Activated CD4-positive, alpha-beta memory T cell treated with anti-CD3 and anti-CD28 coated beads for 36 hours (primary cell): ENCODE measurements at regions of chr17 and their contacts with region 1.

Region 1: GRCh38 chr17:76397687-76398487 is 13.5 kb downstream of the SPHK1 start:
- DNase-seq: peak; percentile 90
- H3K4me3 Mint-ChIP-seq: no peak overlapping the region
- H3K27ac Mint-ChIP-seq: no peak overlapping the region
- H3K4me1 Mint-ChIP-seq: no peaks in the 10 kb centered on the region
- H3K27me3 Mint-ChIP-seq: no peaks in the 10 kb centered on the region

Region 2: DNA sequence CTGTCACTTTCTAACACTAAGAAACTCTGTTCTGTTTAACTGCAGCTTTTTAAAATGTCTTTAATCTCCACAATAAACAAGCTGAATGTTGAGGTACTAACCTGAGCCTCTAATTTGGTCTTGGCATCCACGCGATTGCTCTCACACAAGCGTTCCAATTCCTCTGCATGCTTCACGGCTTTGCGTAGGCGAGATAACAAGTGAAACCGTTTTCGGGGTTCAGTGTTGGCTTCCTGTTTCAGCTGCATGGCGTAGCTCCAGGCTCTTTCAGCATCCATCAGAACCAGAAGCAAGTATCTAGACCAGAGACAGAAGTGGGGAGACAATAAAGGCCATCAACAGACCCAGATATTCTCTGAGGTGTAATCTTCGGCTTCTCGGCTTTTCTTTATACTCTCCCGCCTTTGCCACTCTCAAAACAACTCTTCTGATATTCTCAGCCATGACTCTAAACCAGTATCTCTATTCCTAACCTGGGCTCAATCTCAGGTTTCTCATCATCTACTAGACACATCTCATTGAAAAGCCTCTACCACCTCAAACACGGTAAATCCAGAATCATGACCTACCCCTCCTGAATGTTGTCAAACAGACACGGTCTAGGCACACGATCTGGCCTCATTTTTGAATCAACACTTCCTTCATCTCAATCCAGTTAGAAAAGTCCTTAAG is 333.9 kb before region 1 on chr17:
- CTCF ChIA-PET with region 1: no interaction called
- POLR2A ChIA-PET with region 1: no interaction called
- intact Hi-C with region 1: no loop called
- DNase-seq: peak; percentile 80
- H3K4me3 Mint-ChIP-seq: peak overlapping the region; percentile 25
- H3K27ac Mint-ChIP-seq: peak overlapping the region; percentile 84
- H3K4me1 Mint-ChIP-seq: peaks cover 31% of the 10 kb centered on the region
- H3K27me3 Mint-ChIP-seq: no peaks in the 10 kb centered on the region

Region 3: DNA sequence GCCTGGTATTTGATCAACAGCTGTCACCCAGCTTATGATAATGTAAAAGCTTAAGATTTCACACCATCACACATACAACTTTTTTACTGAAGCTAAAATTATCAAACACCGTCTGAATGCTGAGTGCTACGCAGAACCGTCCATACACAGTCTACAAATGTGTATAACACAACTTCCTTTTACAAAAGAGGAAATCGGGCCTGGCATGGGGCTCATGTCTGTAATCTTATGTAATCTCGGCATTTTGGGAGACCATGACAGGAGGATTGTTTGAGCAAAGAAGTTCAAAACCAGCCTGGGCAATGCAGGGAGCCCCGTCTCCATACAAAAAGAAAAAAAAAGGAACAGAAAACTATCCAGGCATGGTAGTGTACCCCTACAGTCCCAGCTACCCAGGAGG is 70.2 kb before region 1 on chr17:
- CTCF ChIA-PET with region 1: interaction called, 10 read pairs
- POLR2A ChIA-PET with region 1: no interaction called
- intact Hi-C with region 1: no loop called
- DNase-seq: no peak
- H3K4me3 Mint-ChIP-seq: no peak overlapping the region
- H3K27ac Mint-ChIP-seq: no peak overlapping the region
- H3K4me1 Mint-ChIP-seq: no peaks in the 10 kb centered on the region
- H3K27me3 Mint-ChIP-seq: no peaks in the 10 kb centered on the region

Region 4: GRCh38 chr17:76353599-76354316 is 44.1 kb before region 1 on chr17 and contains the start of gene PRPSAP1:
- CTCF ChIA-PET with region 1: interaction called, 33 read pairs
- POLR2A ChIA-PET with region 1: interaction called, 3 read pairs
- intact Hi-C with region 1: no loop called
- DNase-seq: peak; percentile 88
- H3K4me3 Mint-ChIP-seq: peak within 1 kb of the TSS; percentile 96
- H3K27ac Mint-ChIP-seq: peak within 1 kb of the TSS; percentile 99
- H3K4me1 Mint-ChIP-seq: peaks cover 18% of the 10 kb centered on the region
- H3K27me3 Mint-ChIP-seq: no peaks in the 10 kb centered on the region
- total RNA-seq, gene PRPSAP1: 40.1 to 42.1 TPM

Region 5: DNA sequence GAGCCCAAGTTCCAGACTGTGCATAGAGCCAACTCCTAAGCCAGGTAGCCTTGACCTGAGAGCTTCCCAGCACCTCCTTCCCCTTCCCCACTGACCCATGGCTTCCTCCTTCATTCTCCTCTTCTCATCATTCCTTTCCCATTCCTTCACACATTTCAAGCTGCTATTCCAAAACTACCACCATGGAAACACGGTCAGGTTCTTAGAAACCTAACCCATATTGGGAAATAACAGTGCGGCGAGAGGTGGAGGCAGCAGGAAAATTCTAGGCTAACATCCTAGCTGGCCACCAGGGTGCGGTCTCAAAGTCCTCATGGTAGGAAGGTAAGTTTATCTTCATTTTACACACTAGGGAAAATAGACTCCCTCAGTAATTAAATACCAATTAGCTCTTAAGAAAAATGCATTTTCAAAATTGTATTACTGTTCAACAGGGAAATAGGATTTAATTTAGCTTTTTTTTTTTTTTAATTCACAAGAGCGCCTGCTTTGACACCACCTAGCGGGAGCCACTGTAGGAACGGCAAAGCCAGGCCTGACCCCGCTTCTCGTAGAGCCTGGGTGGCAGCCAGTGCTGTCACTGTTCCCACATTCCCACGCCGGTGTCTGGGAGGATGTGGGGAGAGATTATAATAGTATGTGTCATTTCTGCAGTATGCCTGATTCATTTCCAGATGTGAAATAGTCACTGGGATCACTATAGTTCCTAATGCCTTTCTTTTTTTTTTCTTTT is 27.5 kb before region 1 on chr17:
- CTCF ChIA-PET with region 1: interaction called, 36 read pairs
- POLR2A ChIA-PET with region 1: no interaction called
- intact Hi-C with region 1: no loop called
- DNase-seq: peak; percentile 27
- H3K4me3 Mint-ChIP-seq: no peak overlapping the region
- H3K27ac Mint-ChIP-seq: no peak overlapping the region
- H3K4me1 Mint-ChIP-seq: peaks cover 5% of the 10 kb centered on the region
- H3K27me3 Mint-ChIP-seq: no peaks in the 10 kb centered on the region

Region 6: GRCh38 chr17:76408052-76408849 is 10.4 kb after region 1 on chr17:
- CTCF ChIA-PET with region 1: interaction called, 43 read pairs
- POLR2A ChIA-PET with region 1: no interaction called
- intact Hi-C with region 1: no loop called
- DNase-seq: peak; percentile 82
- H3K4me3 Mint-ChIP-seq: no peak overlapping the region
- H3K27ac Mint-ChIP-seq: no peak overlapping the region
- H3K4me1 Mint-ChIP-seq: peaks cover 8% of the 10 kb centered on the region
- H3K27me3 Mint-ChIP-seq: no peaks in the 10 kb centered on the region

Region 7: DNA sequence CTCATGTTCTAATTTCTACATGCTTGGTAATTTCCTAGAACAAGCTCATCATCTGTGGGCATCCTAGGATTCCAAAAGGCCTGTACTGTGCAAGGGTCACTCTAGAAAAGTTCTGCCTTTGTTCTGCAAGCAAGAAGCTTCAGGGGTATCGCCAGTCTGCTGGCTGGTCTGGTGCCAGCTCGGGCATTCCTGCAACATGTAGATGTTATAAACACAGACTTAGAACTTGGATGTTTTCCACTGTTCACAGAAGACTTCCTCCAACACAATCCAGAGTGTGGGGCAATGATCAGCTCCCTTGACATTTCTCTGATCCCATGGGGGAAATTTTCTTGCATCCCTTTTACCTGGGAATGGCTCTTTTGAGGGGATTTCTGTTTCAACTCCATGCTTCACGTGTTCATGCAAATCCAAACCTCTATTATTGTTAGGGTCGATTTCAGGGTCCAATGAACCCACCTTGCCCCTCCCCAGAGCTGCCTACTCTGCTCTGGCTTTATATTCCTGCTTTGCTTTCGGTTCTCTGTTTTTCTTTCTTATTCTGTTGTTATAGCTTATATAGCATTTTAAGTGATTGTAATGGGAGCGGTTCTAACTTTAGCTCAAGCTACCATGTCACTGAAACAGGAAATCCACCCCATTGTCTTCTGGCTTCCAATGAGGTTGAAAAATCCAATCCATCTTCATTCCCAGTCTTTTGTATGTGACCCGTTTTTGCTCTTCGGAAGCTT is 29.8 kb after region 1 on chr17:
- CTCF ChIA-PET with region 1: interaction called, 10 read pairs
- POLR2A ChIA-PET with region 1: no interaction called
- intact Hi-C with region 1: no loop called
- DNase-seq: no peak
- H3K4me3 Mint-ChIP-seq: no peak overlapping the region
- H3K27ac Mint-ChIP-seq: no peak overlapping the region
- H3K4me1 Mint-ChIP-seq: peaks cover 5% of the 10 kb centered on the region
- H3K27me3 Mint-ChIP-seq: no peaks in the 10 kb centered on the region

Region 8: GRCh38 chr17:76467366-76467765 is 69.5 kb after region 1 on chr17 and contains the start of gene AANAT:
- CTCF ChIA-PET with region 1: no interaction called
- POLR2A ChIA-PET with region 1: no interaction called
- intact Hi-C with region 1: no loop called
- DNase-seq: no peak
- H3K4me3 Mint-ChIP-seq: no peak within 1 kb of the TSS
- H3K27ac Mint-ChIP-seq: no peak within 1 kb of the TSS
- H3K4me1 Mint-ChIP-seq: peaks cover 4% of the 10 kb centered on the region
- H3K27me3 Mint-ChIP-seq: no peaks in the 10 kb centered on the region
- total RNA-seq, gene AANAT: not detected

Region 9: GRCh38 chr17:76506408-76507349 is 108.8 kb after region 1 on chr17:
- CTCF ChIA-PET with region 1: interaction called, 24 read pairs
- POLR2A ChIA-PET with region 1: no interaction called
- intact Hi-C with region 1: no loop called
- DNase-seq: peak; percentile 93
- H3K4me3 Mint-ChIP-seq: no peak overlapping the region
- H3K27ac Mint-ChIP-seq: no peak overlapping the region
- H3K4me1 Mint-ChIP-seq: peaks cover 12% of the 10 kb centered on the region
- H3K27me3 Mint-ChIP-seq: no peaks in the 10 kb centered on the region

Region 10: DNA sequence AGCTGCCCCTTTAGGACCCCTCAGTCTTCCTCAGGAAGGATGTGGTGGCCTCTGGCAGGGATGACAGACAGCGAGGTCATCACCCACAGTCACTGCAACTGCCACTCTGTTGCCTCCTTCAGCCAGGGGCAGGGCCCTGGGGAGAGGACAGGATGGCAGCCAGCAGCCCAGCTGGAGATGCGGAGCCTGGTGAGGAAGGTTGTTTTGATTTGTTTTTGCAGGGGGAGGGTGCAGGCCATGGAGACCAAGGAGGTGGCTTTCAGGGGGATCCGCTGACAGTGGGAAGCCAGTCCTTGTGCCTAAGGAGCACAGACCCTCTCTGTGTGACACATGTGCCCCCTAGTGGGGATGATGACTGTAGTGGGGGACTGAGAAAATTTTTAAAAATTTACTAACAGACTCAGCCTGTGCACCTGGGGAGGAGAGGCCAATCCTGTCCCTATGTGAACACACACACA is 149.3 kb after region 1 on chr17:
- CTCF ChIA-PET with region 1: no interaction called
- POLR2A ChIA-PET with region 1: no interaction called
- intact Hi-C with region 1: no loop called
- DNase-seq: peak; percentile 48
- H3K4me3 Mint-ChIP-seq: no peak overlapping the region
- H3K27ac Mint-ChIP-seq: no peak overlapping the region
- H3K4me1 Mint-ChIP-seq: no peaks in the 10 kb centered on the region
- H3K27me3 Mint-ChIP-seq: peaks cover 11% of the 10 kb centered on the region